B cell (primary cell): ENCODE measurements at regions of chr10 and their contacts with region 1.

Region 1: GRCh38 chr10:32958085-32959005 is at the start of gene ITGB1:
- DNase-seq: peak; percentile 85
- ATAC-seq: peak; percentile 89
- H3K4me3 ChIP-seq: peak within 1 kb of the TSS; percentile 64 to 95 (median 90)
- H3K4me3 Mint-ChIP-seq: peak within 1 kb of the TSS; percentile 94
- H3K27ac ChIP-seq: peak within 1 kb of the TSS; percentile 74 to 84
- H3K27ac Mint-ChIP-seq: peak within 1 kb of the TSS; percentile 93
- H3K4me1 ChIP-seq: peaks cover 27 to 35% of the 10 kb centered on the region in 2 donors
- H3K4me1 Mint-ChIP-seq: peaks cover 63% of the 10 kb centered on the region
- H3K27me3 ChIP-seq: no peaks in the 10 kb centered on the region
- H3K27me3 Mint-ChIP-seq: no peaks in the 10 kb centered on the region
- CTCF ChIP-seq: no peak
- total RNA-seq, gene ITGB1: 118 and 128 TPM in 2 replicates

Region 2: DNA sequence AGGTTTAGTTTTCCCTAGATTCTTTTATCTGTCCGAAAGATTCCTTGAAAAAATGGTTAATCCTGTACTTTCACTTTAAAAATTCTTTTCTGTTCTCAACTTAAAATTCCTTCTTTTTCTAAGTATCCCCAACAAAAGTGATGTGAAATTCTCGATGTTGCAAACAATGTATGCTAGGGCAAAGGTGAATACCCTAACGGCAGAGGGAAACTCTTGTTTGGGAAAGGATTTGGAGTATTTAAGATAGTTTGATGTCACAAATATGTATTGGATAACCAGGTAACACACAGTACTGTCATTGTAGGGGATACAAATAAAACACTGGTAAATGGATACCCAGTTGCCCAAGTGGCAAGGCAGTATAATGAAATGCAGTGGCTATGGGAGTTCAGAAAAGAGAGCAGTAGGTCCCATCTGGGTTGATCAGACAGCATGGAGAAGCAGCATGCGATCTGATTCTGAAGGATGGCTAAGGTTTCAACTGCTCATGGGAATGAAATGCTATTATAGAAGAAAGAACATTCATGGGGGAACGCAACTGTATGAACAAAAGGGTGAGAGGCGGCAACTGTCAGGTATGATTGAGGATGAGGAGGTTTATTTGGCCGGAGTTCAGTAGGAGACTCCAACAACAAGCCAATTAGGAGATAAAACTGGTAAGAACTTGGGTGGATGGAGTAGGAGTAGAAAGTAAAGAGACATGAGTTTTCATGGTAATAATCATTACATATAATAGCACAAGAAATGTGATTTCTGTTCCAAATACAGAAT is 608.2 kb before region 1 on chr10:
- CTCF ChIA-PET with region 1: no interaction called
- POLR2A ChIA-PET with region 1: no interaction called
- intact Hi-C with region 1: no loop called
- DNase-seq: no peak
- ATAC-seq: no peak
- H3K4me3 ChIP-seq: no peak overlapping the region
- H3K4me3 Mint-ChIP-seq: no peak overlapping the region
- H3K27ac ChIP-seq: peak overlapping the region in 1 of 2 donors; percentile 36
- H3K27ac Mint-ChIP-seq: no peak overlapping the region
- H3K4me1 ChIP-seq: peaks cover 34 to 38% of the 10 kb centered on the region in 2 donors
- H3K4me1 Mint-ChIP-seq: peaks cover 66% of the 10 kb centered on the region
- H3K27me3 ChIP-seq: no peaks in the 10 kb centered on the region
- H3K27me3 Mint-ChIP-seq: no peaks in the 10 kb centered on the region
- CTCF ChIP-seq: no peak

Region 3: DNA sequence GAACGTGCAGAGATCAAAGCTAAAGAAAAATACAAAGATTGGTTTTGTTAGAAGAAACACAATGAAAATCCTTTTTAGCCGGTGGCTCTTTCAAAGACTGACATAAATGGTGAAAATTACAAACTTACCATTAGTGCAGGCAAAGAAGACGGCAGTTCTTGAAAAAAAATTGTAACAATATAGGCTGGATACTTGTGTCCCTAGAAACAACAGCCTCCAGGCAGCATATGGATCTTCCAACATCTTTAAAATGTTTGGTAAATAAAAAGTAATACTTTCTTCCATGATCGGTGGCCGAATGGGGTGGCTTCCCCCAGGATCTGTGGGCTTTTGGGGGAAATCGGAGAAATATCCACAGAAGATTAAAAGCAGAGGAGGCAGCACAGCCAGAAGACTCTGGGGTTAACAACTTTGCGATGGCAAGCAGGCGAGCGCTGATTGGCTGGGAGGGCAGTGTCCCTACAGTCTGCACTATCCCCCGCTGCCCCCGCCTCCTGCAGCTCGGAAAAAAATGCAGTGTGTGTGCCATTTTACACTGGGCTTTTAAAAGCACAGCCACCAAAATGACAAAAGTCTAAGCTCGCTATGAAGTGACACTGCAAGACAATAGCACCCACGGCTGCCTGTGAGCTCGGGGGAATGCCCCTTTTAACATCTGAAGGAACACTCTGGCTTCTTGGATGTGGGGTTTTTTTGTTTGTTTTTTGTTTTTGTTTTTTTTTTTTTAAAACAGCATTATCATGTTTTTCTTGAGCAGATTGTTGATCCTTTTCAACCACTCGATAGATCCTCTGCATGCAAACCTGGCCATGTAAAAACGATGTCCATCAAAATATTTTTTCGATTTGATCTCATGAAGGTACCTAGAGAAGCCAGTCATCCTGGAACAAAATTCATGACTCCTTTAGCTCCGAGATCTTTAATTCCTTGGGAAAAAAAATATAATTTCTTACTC is 579.7 kb before region 1 on chr10:
- CTCF ChIA-PET with region 1: no interaction called
- POLR2A ChIA-PET with region 1: no interaction called
- intact Hi-C with region 1: loop called (anchors 5 kb)
- DNase-seq: peak; percentile 90
- ATAC-seq: peak; percentile 95
- H3K4me3 ChIP-seq: peak overlapping the region; percentile 63 to 99 (median 83)
- H3K4me3 Mint-ChIP-seq: no peak overlapping the region
- H3K27ac ChIP-seq: peak overlapping the region; percentile 73 to 85
- H3K27ac Mint-ChIP-seq: no peak overlapping the region
- H3K4me1 ChIP-seq: peaks cover 10 to 23% of the 10 kb centered on the region in 2 donors
- H3K4me1 Mint-ChIP-seq: peaks cover 20% of the 10 kb centered on the region
- H3K27me3 ChIP-seq: no peaks in the 10 kb centered on the region
- H3K27me3 Mint-ChIP-seq: no peaks in the 10 kb centered on the region
- CTCF ChIP-seq: no peak

Region 4: DNA sequence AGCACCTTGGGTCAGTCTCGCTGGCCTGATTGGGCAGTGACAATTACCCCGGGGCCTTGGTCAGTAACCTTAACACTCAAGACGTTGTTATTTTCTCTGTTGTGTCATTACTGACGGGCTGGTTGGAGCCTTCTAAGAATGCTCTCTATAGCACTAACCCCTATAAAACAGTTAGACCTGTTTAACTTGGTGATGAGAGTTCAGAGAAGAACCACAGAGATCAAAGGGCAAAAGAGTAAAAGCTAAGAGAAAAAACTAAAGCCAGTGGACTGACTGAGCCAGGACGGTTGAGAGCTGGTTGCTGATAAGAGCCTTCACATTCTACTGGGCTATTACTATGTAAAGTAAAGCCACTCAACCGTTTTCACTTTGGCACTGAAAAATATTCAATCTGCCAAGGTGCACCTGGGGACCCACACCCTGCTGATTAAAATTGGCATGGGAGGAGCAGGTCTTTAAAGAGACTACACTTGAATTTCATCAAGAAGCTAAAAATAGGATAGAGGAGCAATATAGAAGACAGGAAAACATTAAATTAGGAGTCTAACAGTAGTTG is 13.3 kb after region 1 on chr10:
- CTCF ChIA-PET with region 1: no interaction called
- POLR2A ChIA-PET with region 1: no interaction called
- intact Hi-C with region 1: loop called (anchors 1 kb)
- DNase-seq: no peak
- ATAC-seq: peak; percentile 49
- H3K4me3 ChIP-seq: peak overlapping the region in 1 of 5 experiments; percentile 15
- H3K4me3 Mint-ChIP-seq: peak overlapping the region; percentile 86
- H3K27ac ChIP-seq: peak overlapping the region; percentile 22 to 53
- H3K27ac Mint-ChIP-seq: peak overlapping the region; percentile 92
- H3K4me1 ChIP-seq: peaks cover 0 to 23% of the 10 kb centered on the region in 2 donors
- H3K4me1 Mint-ChIP-seq: peaks cover 30% of the 10 kb centered on the region
- H3K27me3 ChIP-seq: peaks cover 0 to 2% (median 0%) of the 10 kb centered on the region in 4 experiments
- H3K27me3 Mint-ChIP-seq: no peaks in the 10 kb centered on the region
- CTCF ChIP-seq: no peak

Region 5: DNA sequence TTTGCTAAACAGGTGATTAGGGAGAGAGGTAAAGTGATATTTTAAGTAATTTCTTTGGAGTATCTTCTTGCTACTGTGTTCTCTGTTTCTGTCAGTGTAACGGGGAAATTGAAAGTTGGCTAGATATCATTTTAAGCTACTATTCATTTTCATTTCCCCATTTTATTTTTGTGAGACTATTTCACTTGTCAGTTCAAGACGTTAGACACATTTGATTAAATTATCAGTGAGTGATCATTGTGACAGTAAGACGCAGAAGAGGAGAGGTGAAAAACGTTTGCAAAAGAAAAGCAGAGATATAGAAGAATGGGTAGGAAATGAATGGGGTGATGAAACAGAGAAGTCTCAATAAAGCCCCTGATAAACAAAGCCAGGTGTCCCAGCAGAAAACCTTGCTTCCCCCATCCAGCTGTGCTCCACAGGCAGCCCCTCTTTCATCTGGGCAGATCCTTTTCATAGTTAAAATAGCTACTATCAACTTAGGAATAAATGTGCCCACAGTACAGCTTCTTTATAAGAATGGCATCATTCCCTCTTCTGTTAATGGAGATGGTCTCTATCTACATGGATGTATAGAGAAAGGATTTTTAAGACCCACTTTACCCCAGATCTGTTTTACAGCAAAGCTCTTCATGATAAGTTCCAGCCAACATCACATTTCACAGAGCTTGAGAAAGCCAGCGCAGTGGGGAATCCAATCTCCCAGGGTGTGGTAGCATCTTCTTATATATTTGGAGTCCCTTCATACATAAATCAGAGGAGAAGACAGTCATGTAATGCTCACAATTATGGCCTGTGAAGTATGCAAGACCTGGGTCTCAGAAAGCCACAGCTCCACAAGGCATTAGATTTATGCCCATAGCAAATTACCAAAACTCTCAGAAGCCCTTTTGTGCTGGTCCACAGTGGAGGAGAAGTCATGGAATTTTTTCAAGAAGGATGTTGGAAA is 137.8 kb after region 1 on chr10:
- CTCF ChIA-PET with region 1: no interaction called
- POLR2A ChIA-PET with region 1: no interaction called
- intact Hi-C with region 1: loop called (anchors 10 kb)
- DNase-seq: peak; percentile 57
- ATAC-seq: peak; percentile 56
- H3K4me3 ChIP-seq: peak overlapping the region in 2 of 5 experiments; percentile 21 to 30
- H3K4me3 Mint-ChIP-seq: peak overlapping the region; percentile 70
- H3K27ac ChIP-seq: peak overlapping the region; percentile 59 to 65
- H3K27ac Mint-ChIP-seq: peak overlapping the region; percentile 81
- H3K4me1 ChIP-seq: peaks cover 44 to 54% of the 10 kb centered on the region in 2 donors
- H3K4me1 Mint-ChIP-seq: peaks cover 65% of the 10 kb centered on the region
- H3K27me3 ChIP-seq: no peaks in the 10 kb centered on the region
- H3K27me3 Mint-ChIP-seq: no peaks in the 10 kb centered on the region
- CTCF ChIP-seq: no peak